Lower leg skin (tissue), 4 donors: ENCODE measurements at regions of chr15 and their contacts with region 1.

Region 1: DNA sequence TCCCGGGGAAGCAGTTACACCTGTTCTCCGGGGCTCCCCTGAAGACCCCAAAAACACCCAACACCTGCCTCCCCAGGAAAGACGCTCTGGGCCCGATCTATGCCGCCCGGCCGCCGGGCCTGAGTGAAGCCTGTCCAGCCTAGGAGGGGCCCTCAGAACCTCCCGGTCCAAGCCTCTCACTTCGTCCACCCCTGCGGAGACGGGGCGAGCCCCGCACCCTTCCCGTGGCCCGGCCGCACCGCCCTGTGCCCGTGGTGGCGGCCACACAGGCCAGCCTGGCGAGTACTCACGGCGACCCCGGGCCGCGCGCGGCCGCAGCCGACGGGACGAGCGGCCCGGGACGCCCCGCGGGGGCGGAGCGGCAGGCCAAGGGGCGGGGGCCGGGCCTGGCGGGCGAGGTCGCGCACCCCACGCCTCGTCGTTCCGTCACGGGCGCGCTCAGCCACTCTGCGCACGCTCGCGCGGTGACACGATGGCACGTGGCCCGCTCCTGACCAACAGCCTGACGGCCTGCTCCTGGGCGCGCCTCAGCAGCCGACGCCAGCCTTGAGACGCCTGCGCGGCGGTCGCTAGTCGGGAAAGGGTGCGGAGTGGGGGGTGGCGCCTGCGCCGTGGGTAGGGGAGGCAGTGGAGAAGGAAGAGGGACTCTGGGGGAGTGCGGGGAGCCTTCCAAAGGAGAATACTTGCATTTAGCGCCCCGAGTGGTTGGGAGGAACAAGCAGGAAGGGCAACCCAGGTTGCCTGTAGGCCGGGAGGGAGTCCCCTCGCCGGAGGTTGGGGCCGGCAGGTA is at the start of gene PARP6:
- DNase-seq: peak; percentile 97 to 100
- H3K4me3 ChIP-seq: peak within 1 kb of the TSS; percentile 88
- CTCF ChIP-seq: no peak
- POLR2A ChIP-seq: no peak
- total RNA-seq, gene PARP6: 47.4 to 61.7 (median 54.8) TPM

Region 2: GRCh38 chr15:72199711-72200212 is 72.6 kb before region 1 on chr15:
- intact Hi-C with region 1: loop called (anchors 10 kb)
- DNase-seq: peak; percentile 79 to 95
- H3K4me3 ChIP-seq: no peak overlapping the region
- CTCF ChIP-seq: peak in 1 of 3 donors; percentile 93
- POLR2A ChIP-seq: no peak

Region 3: GRCh38 chr15:73539212-73540125 is 1267.1 kb after region 1 on chr15:
- intact Hi-C with region 1: no loop called
- DNase-seq: no peak
- H3K4me3 ChIP-seq: no peak overlapping the region
- CTCF ChIP-seq: no peak
- POLR2A ChIP-seq: no peak